GM12878 (cell line): ENCODE measurements at regions of chr4 and their contacts with region 1.

Region 1: DNA sequence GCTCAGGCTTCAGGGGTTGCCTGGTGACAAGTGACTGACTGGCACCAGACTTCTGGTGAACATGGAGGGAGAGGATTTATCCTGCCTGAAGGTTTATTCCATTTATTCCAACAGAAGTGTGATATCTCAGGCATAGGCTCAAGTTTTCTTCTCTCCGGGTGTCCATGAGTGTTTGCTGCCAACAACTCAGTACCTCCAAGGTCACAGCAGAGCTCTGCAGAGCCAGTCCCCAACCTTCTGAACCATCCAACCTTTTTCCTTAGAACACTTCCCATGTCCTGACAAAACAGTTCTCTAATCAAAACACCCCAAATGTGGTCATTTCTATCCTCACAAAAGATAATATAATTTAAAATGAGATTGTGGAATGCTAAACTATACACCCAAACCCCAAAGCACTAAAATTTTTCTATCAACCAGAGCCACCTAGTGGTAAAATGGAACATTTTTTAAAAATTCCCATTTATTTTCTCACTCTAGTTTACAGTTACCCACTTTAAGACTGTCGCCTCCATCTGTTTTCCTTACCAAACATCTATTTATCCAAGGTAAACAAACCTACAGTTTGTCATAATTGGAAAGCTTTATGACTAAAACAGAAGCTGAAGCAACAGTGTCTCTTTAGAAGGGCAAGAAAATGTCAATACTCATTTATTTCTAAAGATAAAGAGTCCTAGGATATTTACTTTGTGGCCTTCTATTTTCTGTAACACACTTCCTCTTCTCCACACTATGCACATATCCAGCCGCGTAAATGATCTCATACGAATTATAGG is 39.6 kb downstream of the TMEM154 start:
- DNase-seq: no peak
- ATAC-seq: 0 out of 3 replicates have a peak, but pooled peaks have one; percentile 3
- H3K4me3 ChIP-seq: no peak overlapping the region
- H3K27ac ChIP-seq: no peak overlapping the region; the same call in 1 of the 2 replicates
- H3K4me1 ChIP-seq: peaks cover 65% of the 10 kb centered on the region
- H3K27me3 ChIP-seq: no peaks in the 10 kb centered on the region
- CTCF ChIP-seq: peak; percentile 34 to 63 (median 49); a peak in 4 of 6 replicates
- EP300 ChIP-seq: no peak
- POLR2A ChIP-seq: no peak
- RAD21 ChIP-seq: peak; percentile 75

Region 2: DNA sequence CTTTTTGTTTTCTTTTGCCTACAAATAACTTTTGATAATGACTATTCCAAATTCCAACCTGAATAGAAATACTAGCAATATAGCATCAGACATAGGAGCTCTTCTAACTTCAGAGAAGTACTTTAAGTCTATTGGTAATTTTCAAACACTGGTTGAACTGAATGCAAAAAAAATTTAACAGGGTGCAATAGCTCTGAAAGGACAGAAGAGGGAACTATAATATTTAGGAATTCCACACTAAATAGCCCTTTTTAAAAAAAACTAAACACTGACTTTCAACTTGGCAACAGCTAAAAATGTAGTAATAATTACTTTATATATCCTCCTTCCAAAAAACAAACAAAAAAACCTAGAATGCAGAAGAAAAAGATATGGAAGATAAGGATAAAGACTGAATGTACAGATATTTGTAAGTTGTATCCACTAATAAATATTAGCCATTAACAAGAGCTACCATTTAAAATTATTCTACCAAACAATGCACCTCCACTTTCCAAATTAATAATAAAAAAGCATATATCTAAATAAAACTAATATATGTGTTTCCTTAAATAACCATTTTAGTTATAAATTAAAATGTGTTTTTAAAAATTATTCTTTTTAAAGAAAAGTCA is 185.7 kb before region 1 on chr4:
- CTCF ChIA-PET with region 1: interaction called, 186 read pairs
- POLR2A ChIA-PET with region 1: interaction called, 7 read pairs
- RAD21 ChIA-PET with region 1: interaction called, 101 read pairs
- SMC1A ChIA-PET with region 1: interaction called, 227 read pairs
- in situ Hi-C with region 1: no loop called
- intact Hi-C with region 1: loop called (anchors 2 kb)
- DNase-seq: no peak
- ATAC-seq: peak; percentile 15; the same call in 2 of the 3 replicates
- H3K4me3 ChIP-seq: no peak overlapping the region
- H3K27ac ChIP-seq: no peak overlapping the region
- H3K4me1 ChIP-seq: peaks cover 12% of the 10 kb centered on the region
- H3K27me3 ChIP-seq: no peaks in the 10 kb centered on the region
- CTCF ChIP-seq: peak; percentile 50 to 60 (median 60)
- EP300 ChIP-seq: no peak
- POLR2A ChIP-seq: no peak
- RAD21 ChIP-seq: peak; percentile 65

Region 3: GRCh38 chr4:152515678-152516077 is 124.6 kb before region 1 on chr4:
- CTCF ChIA-PET with region 1: interaction called, 9 read pairs
- POLR2A ChIA-PET with region 1: interaction called, 3 read pairs
- RAD21 ChIA-PET with region 1: interaction called, 4 read pairs
- SMC1A ChIA-PET with region 1: interaction called, 10 read pairs
- in situ Hi-C with region 1: no loop called
- intact Hi-C with region 1: no loop called
- DNase-seq: no peak
- ATAC-seq: no peak
- H3K4me3 ChIP-seq: no peak overlapping the region
- H3K27ac ChIP-seq: no peak overlapping the region
- H3K4me1 ChIP-seq: peaks cover 15% of the 10 kb centered on the region; the same call in 1 of the 2 replicates
- H3K27me3 ChIP-seq: no peaks in the 10 kb centered on the region
- CTCF ChIP-seq: no peak
- EP300 ChIP-seq: no peak
- POLR2A ChIP-seq: no peak
- RAD21 ChIP-seq: no peak

Region 4: GRCh38 chr4:152577708-152578396 is 62.4 kb before region 1 on chr4:
- CTCF ChIA-PET with region 1: interaction called, 10 read pairs
- POLR2A ChIA-PET with region 1: interaction called, 4 read pairs
- RAD21 ChIA-PET with region 1: interaction called, 14 read pairs
- SMC1A ChIA-PET with region 1: interaction called, 18 read pairs
- in situ Hi-C with region 1: no loop called
- intact Hi-C with region 1: no loop called
- DNase-seq: no peak
- ATAC-seq: peak; percentile 94
- H3K4me3 ChIP-seq: no peak overlapping the region
- H3K27ac ChIP-seq: no peak overlapping the region
- H3K4me1 ChIP-seq: no peaks in the 10 kb centered on the region
- H3K27me3 ChIP-seq: no peaks in the 10 kb centered on the region
- CTCF ChIP-seq: 0 out of 6 replicates have a peak, but pooled peaks of 1 of the 3 experiments have one; percentile 5
- EP300 ChIP-seq: no peak
- POLR2A ChIP-seq: no peak
- RAD21 ChIP-seq: no peak

Region 5: GRCh38 chr4:152696764-152697261 is 56.6 kb after region 1 on chr4:
- CTCF ChIA-PET with region 1: interaction called, 34 read pairs
- POLR2A ChIA-PET with region 1: interaction called, 3 read pairs
- RAD21 ChIA-PET with region 1: interaction called, 37 read pairs
- SMC1A ChIA-PET with region 1: interaction called, 35 read pairs
- in situ Hi-C with region 1: no loop called
- intact Hi-C with region 1: loop called (anchors 2 kb)
- DNase-seq: peak; percentile 98
- ATAC-seq: peak; percentile 97
- H3K4me3 ChIP-seq: peak overlapping the region; percentile 42; the same call in 1 of the 2 replicates
- H3K27ac ChIP-seq: peak overlapping the region; percentile 71
- H3K4me1 ChIP-seq: peaks cover 20% of the 10 kb centered on the region
- H3K27me3 ChIP-seq: no peaks in the 10 kb centered on the region
- CTCF ChIP-seq: no peak
- EP300 ChIP-seq: peak; percentile 85 to 93; a peak in 3 of 4 replicates
- POLR2A ChIP-seq: no peak
- RAD21 ChIP-seq: no peak